HepG2 (cell line): ENCODE measurements at regions of chr6 and their contacts with region 1.

Region 1: GRCh38 chr6:158536084-158536890 is 23.6 kb upstream of the TMEM181 start:
- DNase-seq: peak; percentile 84
- ATAC-seq: peak; percentile 76
- H3K4me3 ChIP-seq: peak overlapping the region; percentile 70 to 95 (median 86)
- H3K27ac ChIP-seq: peak overlapping the region; percentile 58
- H3K4me1 ChIP-seq: peaks cover 37% of the 10 kb centered on the region
- H3K27me3 ChIP-seq: no peaks in the 10 kb centered on the region
- CTCF ChIP-seq: peak; percentile 50
- EP300 ChIP-seq: no peak
- POLR2A ChIP-seq: no peak; a peak in 1 of 4 replicates
- RAD21 ChIP-seq: 0 out of 2 replicates have a peak, but pooled peaks have one; percentile 9

Region 2: DNA sequence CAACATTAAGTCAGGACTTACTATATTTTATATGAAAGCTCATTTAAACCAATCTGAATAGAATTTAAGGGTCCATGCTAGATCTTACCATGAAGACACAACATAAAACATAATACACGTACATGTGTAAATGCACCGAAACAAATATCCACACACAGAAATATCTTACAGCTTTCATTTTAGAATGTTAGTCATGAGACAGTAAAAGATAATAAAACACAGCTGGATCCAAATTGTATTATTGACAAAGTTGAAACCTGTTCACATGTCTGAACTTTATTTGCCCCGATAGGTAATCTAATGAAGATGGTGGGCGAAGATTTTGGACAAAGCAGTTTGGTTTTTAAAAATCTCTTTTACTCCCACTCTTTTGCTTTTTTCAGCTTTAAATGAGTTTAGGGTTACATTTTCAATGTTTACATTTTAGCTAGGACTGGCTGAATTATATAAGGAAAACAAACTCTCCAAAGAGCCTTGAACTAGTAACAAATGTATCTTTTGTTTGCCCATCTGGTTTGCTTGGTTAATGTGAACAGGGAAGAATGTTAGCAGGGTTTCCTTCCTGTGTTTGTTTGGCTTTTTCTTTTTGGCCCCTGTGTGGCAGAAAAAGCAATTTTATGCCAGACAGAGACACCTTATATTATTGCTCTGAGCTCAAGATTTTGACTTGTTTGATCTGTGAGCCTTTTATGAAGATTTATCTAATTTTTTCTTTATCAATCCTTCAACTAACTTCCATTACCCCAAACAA is 18.5 kb after region 1 on chr6:
- CTCF ChIA-PET with region 1: no interaction called
- POLR2A ChIA-PET with region 1: interaction called, 11 read pairs
- in situ Hi-C with region 1: no loop called
- intact Hi-C with region 1: loop called (anchors 2 kb)
- DNase-seq: peak; percentile 96
- ATAC-seq: peak; percentile 84
- H3K4me3 ChIP-seq: peak overlapping the region in 2 of 3 experiments; percentile 13 to 33; a peak in 3 of 6 replicates
- H3K27ac ChIP-seq: peak overlapping the region; percentile 77
- H3K4me1 ChIP-seq: peaks cover 78% of the 10 kb centered on the region
- H3K27me3 ChIP-seq: no peaks in the 10 kb centered on the region
- CTCF ChIP-seq: 0 out of 2 replicates have a peak, but pooled peaks have one; percentile 14
- EP300 ChIP-seq: peak in 1 of 2 experiments; percentile 97; a peak in 2 of 4 replicates
- POLR2A ChIP-seq: no peak
- RAD21 ChIP-seq: no peak; the same call in 1 of the 2 replicates

Region 3: GRCh38 chr6:158571826-158572652 is 35.8 kb after region 1 on chr6:
- CTCF ChIA-PET with region 1: no interaction called
- POLR2A ChIA-PET with region 1: interaction called, 11 read pairs
- in situ Hi-C with region 1: no loop called
- intact Hi-C with region 1: loop called (anchors 5 kb)
- DNase-seq: peak; percentile 94
- ATAC-seq: peak; percentile 95
- H3K4me3 ChIP-seq: peak overlapping the region in 2 of 3 experiments; percentile 33 to 60; a peak in 4 of 6 replicates
- H3K27ac ChIP-seq: peak overlapping the region; percentile 70
- H3K4me1 ChIP-seq: peaks cover 93% of the 10 kb centered on the region
- H3K27me3 ChIP-seq: no peaks in the 10 kb centered on the region
- CTCF ChIP-seq: peak; percentile 45
- EP300 ChIP-seq: peak in 1 of 2 experiments; percentile 61; a peak in 2 of 4 replicates
- POLR2A ChIP-seq: no peak
- RAD21 ChIP-seq: peak; percentile 77